ENCODE measurements at regions of chr2 and their contacts with region 1.

Region 1: GRCh38 chr2:237744613-237745249 is 53.8 kb upstream of the RBM44 start:
- DNase-seq: peak; percentile 67
- H3K4me3 ChIP-seq: no peak overlapping the region
- H3K27ac ChIP-seq: peak overlapping the region; percentile 2 to 35
- H3K4me1 ChIP-seq: peaks cover 6% of the 10 kb centered on the region
- H3K27me3 ChIP-seq: no peaks in the 10 kb centered on the region
- CTCF ChIP-seq: peak; percentile 97 to 100 (median 98)
- POLR2A ChIP-seq: no peak

Region 2: GRCh38 chr2:237512774-237513466 is 231.8 kb before region 1 on chr2:
- intact Hi-C with region 1: loop called (anchors 5 kb)
- DNase-seq: peak; percentile 86
- H3K4me3 ChIP-seq: no peak overlapping the region
- H3K27ac ChIP-seq: peak overlapping the region; percentile 71 to 98
- H3K4me1 ChIP-seq: peaks cover 39% of the 10 kb centered on the region
- H3K27me3 ChIP-seq: no peaks in the 10 kb centered on the region
- CTCF ChIP-seq: peak; percentile 77 to 94 (median 93)
- POLR2A ChIP-seq: no peak

Region 3: GRCh38 chr2:237585590-237586221 is 159.0 kb before region 1 on chr2:
- intact Hi-C with region 1: loop called (anchors 2 kb)
- DNase-seq: no peak
- H3K4me3 ChIP-seq: no peak overlapping the region
- H3K27ac ChIP-seq: no peak overlapping the region
- H3K4me1 ChIP-seq: peaks cover 9% of the 10 kb centered on the region
- H3K27me3 ChIP-seq: no peaks in the 10 kb centered on the region
- CTCF ChIP-seq: no peak
- POLR2A ChIP-seq: no peak

Region 4: GRCh38 chr2:237603718-237604362 is 140.9 kb before region 1 on chr2:
- intact Hi-C with region 1: loop called (anchors 5 kb)
- DNase-seq: no peak
- H3K4me3 ChIP-seq: no peak overlapping the region
- H3K27ac ChIP-seq: no peak overlapping the region
- H3K4me1 ChIP-seq: no peaks in the 10 kb centered on the region
- H3K27me3 ChIP-seq: no peaks in the 10 kb centered on the region
- CTCF ChIP-seq: no peak
- POLR2A ChIP-seq: peak; percentile 19

Region 5: GRCh38 chr2:237627441-237628246 is 117.1 kb before region 1 on chr2 and contains the start of gene LRRFIP1:
- intact Hi-C with region 1: no loop called
- DNase-seq: no peak
- H3K4me3 ChIP-seq: peak within 1 kb of the TSS; percentile 66 to 77
- H3K27ac ChIP-seq: peak within 1 kb of the TSS; percentile 65 to 75
- H3K4me1 ChIP-seq: peaks cover 9% of the 10 kb centered on the region
- H3K27me3 ChIP-seq: no peaks in the 10 kb centered on the region
- CTCF ChIP-seq: no peak
- POLR2A ChIP-seq: no peak
- total RNA-seq, gene LRRFIP1: 66.1 to 73.1 TPM

Region 6: DNA sequence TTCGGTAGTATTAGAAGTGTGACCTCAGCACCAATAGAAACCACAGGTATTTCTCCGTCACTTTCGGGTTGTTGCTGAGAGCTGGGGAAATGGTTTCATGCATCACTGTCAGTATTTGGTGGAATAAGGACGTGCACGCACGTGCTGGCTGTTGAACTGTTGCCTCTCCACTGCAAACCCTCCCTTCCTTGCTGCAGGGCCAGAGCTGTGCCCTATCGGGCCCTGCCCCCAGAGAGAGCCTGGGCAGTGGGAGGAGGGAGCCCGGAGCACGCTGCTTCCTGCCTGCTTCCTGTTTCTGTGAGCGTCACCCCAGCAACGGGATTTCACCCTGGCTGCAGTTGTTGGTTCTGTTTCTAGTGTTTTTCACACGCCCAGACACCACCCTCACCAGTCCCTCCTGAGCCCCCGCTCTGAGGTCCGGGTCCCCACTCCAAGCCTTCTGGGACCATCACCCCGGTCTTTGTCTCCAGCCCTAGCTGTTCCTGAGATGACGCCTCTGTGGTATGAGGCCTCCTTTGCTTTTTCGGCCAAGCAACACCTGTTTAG is 69.9 kb before region 1 on chr2:
- intact Hi-C with region 1: loop called (anchors 2 kb)
- DNase-seq: peak; percentile 86
- H3K4me3 ChIP-seq: peak overlapping the region in 1 of 2 donors; percentile 8
- H3K27ac ChIP-seq: peak overlapping the region; percentile 71 to 76
- H3K4me1 ChIP-seq: peaks cover 15% of the 10 kb centered on the region
- H3K27me3 ChIP-seq: no peaks in the 10 kb centered on the region
- CTCF ChIP-seq: peak in 1 of 4 experiments; percentile 46
- POLR2A ChIP-seq: peak; percentile 40

Region 7: GRCh38 chr2:237922641-237923361 is 178.1 kb after region 1 on chr2:
- intact Hi-C with region 1: no loop called
- DNase-seq: no peak
- H3K4me3 ChIP-seq: no peak overlapping the region
- H3K27ac ChIP-seq: peak overlapping the region in 1 of 2 donors; percentile 38
- H3K4me1 ChIP-seq: no peaks in the 10 kb centered on the region
- H3K27me3 ChIP-seq: no peaks in the 10 kb centered on the region
- CTCF ChIP-seq: no peak
- POLR2A ChIP-seq: no peak

Measured in prostate gland (tissue), 2 donors.